ENCODE measurements at regions of chr6 and their contacts with region 1.

Region 1: DNA sequence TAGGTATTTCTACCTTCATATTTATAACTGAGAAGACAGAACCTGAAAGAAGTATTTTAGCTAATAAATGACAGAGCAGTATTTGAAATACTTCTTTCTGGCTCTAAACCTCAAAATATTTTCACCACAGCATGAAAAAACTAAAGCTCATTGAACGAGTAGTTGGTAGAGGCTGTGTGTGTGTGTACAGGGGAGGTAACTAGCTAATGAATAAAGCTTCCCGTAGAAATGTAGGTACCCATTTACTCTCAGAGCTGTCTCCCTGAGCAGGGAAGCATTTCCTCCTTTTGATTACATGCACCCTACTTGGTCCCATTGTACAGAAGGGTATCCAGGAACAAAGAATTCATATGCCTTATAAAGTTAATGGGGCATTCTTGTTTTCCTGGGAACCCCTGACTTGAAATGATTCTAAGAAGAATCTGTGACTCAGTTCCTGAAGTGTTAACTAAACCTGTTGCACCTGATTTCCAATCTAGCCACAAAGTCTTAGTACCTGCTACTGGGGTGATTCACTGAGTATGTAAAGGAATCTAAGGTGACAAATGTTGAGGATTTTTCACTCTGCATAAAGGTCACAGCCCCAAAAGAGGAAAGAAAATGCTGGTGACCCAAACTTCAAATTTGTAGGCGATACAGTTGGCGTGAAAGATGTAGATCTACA is 12.5 kb downstream of the CRYBG1 start:
- DNase-seq: no peak

Region 2: DNA sequence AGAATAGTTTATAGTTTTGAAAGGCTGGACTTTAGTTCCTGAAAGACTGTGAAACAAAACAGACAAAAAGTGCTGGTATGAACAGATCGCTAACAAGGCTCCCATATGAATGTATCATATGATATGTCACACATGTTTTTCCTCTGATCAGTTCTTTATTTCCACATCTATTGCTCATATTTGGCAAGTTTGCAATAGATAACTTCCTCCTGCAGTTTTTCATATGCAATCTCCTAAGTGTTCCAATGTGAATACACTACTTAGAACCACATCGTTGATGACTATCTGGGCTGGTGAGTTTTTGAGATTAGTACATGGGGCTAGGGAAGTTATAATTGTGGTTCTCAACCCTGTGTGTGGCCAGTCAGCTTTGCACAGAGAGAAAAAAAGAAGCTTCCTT is 10.6 kb after region 1 on chr6:
- intact Hi-C with region 1: no loop called
- DNase-seq: no peak

Region 3: DNA sequence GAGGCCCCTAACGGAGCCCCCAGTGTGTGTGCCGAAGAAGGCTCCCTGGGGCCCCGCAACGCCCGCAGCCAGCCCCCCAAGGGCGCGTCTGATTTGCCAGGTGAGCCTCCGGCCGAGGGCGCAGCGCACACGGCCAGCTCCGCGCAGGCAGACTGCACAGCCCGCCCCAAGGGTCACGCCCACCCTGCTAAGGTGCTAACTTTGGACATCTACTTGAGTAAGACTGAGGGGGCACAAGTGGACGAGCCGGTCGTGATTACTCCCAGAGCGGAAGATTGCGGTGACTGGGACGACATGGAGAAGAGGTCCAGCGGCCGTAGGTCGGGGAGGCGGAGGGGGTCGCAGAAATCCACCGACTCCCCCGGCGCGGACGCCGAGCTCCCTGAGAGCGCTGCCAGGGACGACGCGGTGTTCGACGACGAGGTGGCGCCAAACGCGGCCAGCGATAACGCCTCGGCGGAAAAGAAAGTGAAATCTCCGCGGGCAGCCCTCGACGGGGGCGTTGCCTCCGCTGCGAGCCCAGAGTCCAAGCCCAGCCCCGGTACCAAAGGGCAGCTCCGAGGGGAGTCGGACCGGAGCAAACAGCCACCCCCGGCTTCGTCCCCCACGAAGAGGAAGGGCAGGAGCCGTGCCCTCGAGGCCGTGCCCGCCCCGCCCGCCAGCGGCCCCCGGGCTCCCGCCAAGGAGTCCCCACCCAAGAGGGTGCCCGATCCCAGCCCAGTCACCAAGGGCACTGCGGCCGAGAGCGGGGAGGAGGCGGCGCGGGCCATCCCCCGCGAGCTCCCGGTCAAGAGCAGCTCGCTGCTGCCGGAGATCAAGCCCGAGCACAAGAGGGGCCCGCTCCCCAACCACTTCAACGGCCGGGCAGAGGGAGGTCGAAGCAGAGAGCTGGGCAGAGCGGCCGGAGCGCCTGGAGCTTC is 139.3 kb after region 1 on chr6:
- intact Hi-C with region 1: loop called in 1 of 2 experiments (anchors 5 kb)
- DNase-seq: peak; percentile 93